ENCODE measurements at regions of chrX and their contacts with region 1.

Region 1: DNA sequence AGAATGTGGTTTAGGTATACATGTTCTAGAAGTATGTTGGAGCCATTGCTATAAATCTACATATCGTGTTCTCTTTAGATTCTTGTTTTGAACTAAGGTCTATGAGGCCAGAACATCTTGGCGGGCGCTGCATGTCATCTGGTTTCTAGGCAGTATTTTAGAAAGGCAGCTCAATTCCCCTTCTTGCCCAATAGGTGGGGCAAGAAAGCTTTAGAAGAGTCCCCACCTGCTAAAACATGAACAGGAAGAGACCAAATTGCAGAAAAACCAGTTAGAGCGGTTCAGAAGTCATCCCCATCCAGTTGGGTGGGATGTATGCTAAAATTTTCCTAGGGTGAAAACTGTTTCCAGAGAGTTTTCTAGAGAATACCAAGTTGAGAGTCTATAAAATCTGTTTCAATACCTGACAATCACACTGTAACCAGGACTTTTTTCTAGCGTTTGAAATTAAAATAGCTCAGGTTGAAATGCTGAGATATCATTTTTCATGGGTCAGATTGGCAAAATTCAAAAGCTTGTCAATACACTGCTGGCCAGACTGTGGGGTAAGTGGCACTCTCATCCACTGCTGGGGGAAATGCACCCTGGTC is 17.5 kb upstream of the SH3KBP1 start:
- DNase-seq: peak; percentile 54
- H3K4me3 ChIP-seq: no peak overlapping the region
- H3K27ac ChIP-seq: no peak overlapping the region
- H3K4me1 ChIP-seq: peaks cover 3% of the 10 kb centered on the region
- H3K27me3 ChIP-seq: no peaks in the 10 kb centered on the region
- CTCF ChIP-seq: peak; percentile 54 to 80

Region 2: DNA sequence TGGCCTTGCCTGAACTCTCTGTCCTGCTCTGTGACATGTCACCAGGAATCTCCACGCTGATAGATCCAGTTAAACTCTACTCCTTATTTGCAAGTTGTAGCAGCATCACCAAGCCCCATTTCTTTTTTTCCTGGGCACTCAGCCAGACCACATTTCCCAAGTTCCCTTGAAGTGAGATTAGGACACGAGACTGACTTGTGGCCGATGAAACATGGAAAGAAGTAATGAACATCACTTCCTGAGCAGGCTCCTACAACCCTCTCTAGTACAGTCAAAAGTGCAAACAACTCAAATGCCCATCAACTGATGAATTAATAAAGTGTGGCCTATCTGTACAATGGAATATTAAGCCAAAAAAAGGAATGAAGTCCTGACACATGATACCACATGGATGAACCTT is 464.2 kb before region 1 on chrX:
- CTCF ChIA-PET with region 1: no interaction called
- dilution Hi-C with region 1: no loop called
- in situ Hi-C with region 1: no loop called
- intact Hi-C with region 1: no loop called
- DNase-seq: peak; percentile 49
- H3K4me3 ChIP-seq: no peak overlapping the region
- H3K27ac ChIP-seq: no peak overlapping the region
- H3K4me1 ChIP-seq: no peaks in the 10 kb centered on the region
- H3K27me3 ChIP-seq: no peaks in the 10 kb centered on the region
- CTCF ChIP-seq: no peak

Region 3: DNA sequence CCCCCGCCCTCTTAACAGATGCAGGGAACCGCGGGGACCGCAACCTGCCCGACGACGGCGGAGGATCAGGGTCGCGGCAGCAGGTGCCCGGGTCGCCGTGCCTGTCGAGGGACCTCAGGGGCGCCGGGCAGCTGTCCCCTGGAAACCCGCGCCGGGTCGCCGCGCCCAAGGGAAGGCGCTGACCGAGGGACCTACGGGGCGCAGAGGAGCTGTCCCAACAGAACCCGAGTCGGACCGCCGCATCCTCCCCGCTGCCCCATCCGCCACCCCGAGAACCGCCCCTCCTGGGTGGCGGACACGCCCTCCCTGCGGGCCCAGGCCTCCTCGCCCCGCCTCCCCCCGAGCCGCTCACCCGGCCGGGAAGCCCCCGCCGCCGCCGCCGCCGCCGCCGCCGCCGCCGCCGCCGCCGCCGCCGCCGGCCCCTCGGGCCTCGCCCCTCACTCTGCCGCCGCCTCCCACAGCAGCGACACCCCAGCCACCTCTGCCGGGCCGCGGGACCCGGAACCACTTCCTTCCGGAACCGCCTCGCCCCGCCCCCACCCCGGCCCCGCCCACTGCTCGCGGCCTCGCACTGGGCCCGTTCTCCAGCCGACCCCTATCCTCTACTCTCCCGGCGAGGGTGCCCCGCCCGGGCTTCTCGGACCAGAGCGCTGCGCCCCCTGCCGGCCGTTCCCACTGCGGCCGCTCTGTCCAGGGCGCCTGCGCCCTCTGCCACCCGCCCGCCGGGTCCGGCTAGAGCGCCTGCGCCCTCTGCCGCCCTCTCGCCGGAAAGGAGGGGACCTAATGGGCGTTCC is 85.9 kb after region 1 on chrX and contains the start of gene BCLAF3:
- CTCF ChIA-PET with region 1: no interaction called
- dilution Hi-C with region 1: no loop called
- in situ Hi-C with region 1: no loop called
- intact Hi-C with region 1: loop called (anchors 1 kb)
- DNase-seq: peak; percentile 79
- H3K4me3 ChIP-seq: peak within 1 kb of the TSS; percentile 55 to 72 (median 71)
- H3K27ac ChIP-seq: peak within 1 kb of the TSS; percentile 16
- H3K4me1 ChIP-seq: no peaks in the 10 kb centered on the region
- H3K27me3 ChIP-seq: no peaks in the 10 kb centered on the region
- CTCF ChIP-seq: peak; percentile 42 to 68
- total RNA-seq, gene BCLAF3: 7.5 to 11.0 TPM

Region 4: DNA sequence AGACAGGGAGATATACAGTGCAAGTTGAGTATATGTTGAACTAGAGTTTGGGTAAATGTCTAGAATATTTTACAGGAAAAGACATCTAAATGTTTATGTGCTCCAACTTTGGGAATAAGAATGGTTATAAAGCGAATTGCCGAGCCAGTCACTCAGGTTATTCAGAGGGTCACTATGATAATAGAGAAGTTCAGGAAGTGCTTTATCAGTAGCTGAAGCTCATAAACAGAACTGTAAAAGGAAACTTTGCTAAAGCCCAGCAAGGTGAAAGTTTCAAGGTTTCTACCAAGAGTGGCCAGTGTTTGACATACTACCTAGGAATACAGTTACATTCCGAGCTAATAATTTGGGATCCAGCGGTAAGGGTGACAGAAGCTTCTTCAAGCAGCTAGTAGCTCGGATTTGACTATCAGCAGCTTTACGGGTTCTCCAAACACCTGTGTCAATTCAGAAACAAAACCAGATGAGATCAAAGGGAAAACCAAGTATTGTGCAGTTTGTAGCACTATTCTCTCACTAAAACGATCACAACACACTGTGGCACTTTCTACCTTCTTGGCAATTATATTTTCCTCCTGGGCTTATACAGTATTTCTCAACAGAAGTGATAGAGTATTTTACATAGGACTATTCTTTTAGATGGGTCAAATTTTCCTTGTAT is 103.2 kb after region 1 on chrX:
- CTCF ChIA-PET with region 1: no interaction called
- dilution Hi-C with region 1: loop called (anchors 5 kb)
- in situ Hi-C with region 1: no loop called
- intact Hi-C with region 1: no loop called
- DNase-seq: no peak
- H3K4me3 ChIP-seq: no peak overlapping the region
- H3K27ac ChIP-seq: no peak overlapping the region
- H3K4me1 ChIP-seq: no peaks in the 10 kb centered on the region
- H3K27me3 ChIP-seq: no peaks in the 10 kb centered on the region
- CTCF ChIP-seq: no peak

Region 5: DNA sequence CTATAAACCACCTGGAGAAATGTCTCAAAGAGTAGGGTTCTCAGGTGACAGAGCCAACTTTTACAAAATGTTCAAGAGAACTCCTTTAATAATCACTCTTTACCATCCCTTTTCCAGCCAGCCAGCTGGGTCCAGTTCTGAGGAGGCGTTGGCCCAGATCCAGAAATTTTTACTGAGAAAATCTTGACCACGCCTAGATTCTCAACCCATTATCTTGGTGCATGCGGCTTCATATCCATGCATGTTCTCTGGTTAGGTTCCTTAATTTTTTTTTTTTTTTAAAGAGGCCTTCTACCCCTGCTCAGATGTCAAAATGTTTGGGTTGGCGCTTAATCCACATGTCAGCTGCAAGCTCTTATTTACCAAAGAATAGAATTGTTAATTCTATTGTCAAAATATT is 223.8 kb after region 1 on chrX:
- CTCF ChIA-PET with region 1: no interaction called
- dilution Hi-C with region 1: no loop called
- in situ Hi-C with region 1: no loop called
- intact Hi-C with region 1: loop called (anchors 5 kb)
- DNase-seq: peak; percentile 6
- H3K4me3 ChIP-seq: no peak overlapping the region
- H3K27ac ChIP-seq: no peak overlapping the region
- H3K4me1 ChIP-seq: no peaks in the 10 kb centered on the region
- H3K27me3 ChIP-seq: no peaks in the 10 kb centered on the region
- CTCF ChIP-seq: no peak

Region 6: GRCh38 chrX:20487227-20487626 is 582.4 kb after region 1 on chrX:
- CTCF ChIA-PET with region 1: no interaction called
- dilution Hi-C with region 1: no loop called
- in situ Hi-C with region 1: no loop called
- intact Hi-C with region 1: no loop called
- DNase-seq: peak; percentile 53
- H3K4me3 ChIP-seq: no peak overlapping the region
- H3K27ac ChIP-seq: no peak overlapping the region
- H3K4me1 ChIP-seq: no peaks in the 10 kb centered on the region
- H3K27me3 ChIP-seq: no peaks in the 10 kb centered on the region
- CTCF ChIP-seq: no peak

Measured in mammary epithelial cell (primary cell).